GM10248 (cell line): ENCODE measurements at regions of chr18 and their contacts with region 1.

Region 1: GRCh38 chr18:51739044-51739666 is 541.7 kb upstream of the MEX3C start:
- DNase-seq: peak; percentile 72
- CTCF ChIP-seq: no peak

Region 2: GRCh38 chr18:51751901-51752300 is 12.7 kb after region 1 on chr18:
- CTCF ChIA-PET with region 1: interaction called, 10 read pairs
- POLR2A ChIA-PET with region 1: no interaction called
- DNase-seq: no peak
- CTCF ChIP-seq: no peak